AG04450 (cell line): ENCODE measurements at regions of chr10 and their contacts with region 1.

Region 1: GRCh38 chr10:5614155-5614721 is 52.2 kb downstream of the ASB13 start:
- DNase-seq: no peak
- H3K4me3 ChIP-seq: no peak overlapping the region
- H3K27ac ChIP-seq: peak overlapping the region; percentile 52
- H3K27me3 ChIP-seq: no peaks in the 10 kb centered on the region
- CTCF ChIP-seq: no peak

Region 2: GRCh38 chr10:5559642-5560141 is 54.5 kb before region 1 on chr10:
- CTCF ChIA-PET with region 1: no interaction called
- POLR2A ChIA-PET with region 1: no interaction called
- DNase-seq: no peak
- H3K4me3 ChIP-seq: no peak overlapping the region
- H3K27ac ChIP-seq: peak overlapping the region; percentile 52
- H3K27me3 ChIP-seq: no peaks in the 10 kb centered on the region
- CTCF ChIP-seq: no peak

Region 3: GRCh38 chr10:6182454-6183098 is 568.3 kb after region 1 on chr10:
- CTCF ChIA-PET with region 1: no interaction called
- POLR2A ChIA-PET with region 1: interaction called, 14 read pairs
- DNase-seq: no peak
- H3K4me3 ChIP-seq: no peak overlapping the region
- H3K27ac ChIP-seq: no peak overlapping the region
- H3K27me3 ChIP-seq: no peaks in the 10 kb centered on the region
- CTCF ChIP-seq: no peak

Region 4: GRCh38 chr10:6201516-6201975 is 587.3 kb after region 1 on chr10:
- CTCF ChIA-PET with region 1: no interaction called
- POLR2A ChIA-PET with region 1: no interaction called
- DNase-seq: no peak
- H3K4me3 ChIP-seq: peak overlapping the region; percentile 55
- H3K27ac ChIP-seq: no peak overlapping the region
- H3K27me3 ChIP-seq: no peaks in the 10 kb centered on the region
- CTCF ChIP-seq: no peak